Keratinocyte (primary cell): ENCODE measurements at regions of chr1 and their contacts with region 1.

Region 1: GRCh38 chr1:100459358-100460114 is 78.4 kb upstream of the GPR88 start:
- DNase-seq: no peak
- H3K4me3 ChIP-seq: no peak overlapping the region
- H3K27ac ChIP-seq: no peak overlapping the region
- H3K4me1 ChIP-seq: no peaks in the 10 kb centered on the region
- H3K27me3 ChIP-seq: no peaks in the 10 kb centered on the region
- CTCF ChIP-seq: peak; percentile 82 to 92 (median 87)

Region 2: DNA sequence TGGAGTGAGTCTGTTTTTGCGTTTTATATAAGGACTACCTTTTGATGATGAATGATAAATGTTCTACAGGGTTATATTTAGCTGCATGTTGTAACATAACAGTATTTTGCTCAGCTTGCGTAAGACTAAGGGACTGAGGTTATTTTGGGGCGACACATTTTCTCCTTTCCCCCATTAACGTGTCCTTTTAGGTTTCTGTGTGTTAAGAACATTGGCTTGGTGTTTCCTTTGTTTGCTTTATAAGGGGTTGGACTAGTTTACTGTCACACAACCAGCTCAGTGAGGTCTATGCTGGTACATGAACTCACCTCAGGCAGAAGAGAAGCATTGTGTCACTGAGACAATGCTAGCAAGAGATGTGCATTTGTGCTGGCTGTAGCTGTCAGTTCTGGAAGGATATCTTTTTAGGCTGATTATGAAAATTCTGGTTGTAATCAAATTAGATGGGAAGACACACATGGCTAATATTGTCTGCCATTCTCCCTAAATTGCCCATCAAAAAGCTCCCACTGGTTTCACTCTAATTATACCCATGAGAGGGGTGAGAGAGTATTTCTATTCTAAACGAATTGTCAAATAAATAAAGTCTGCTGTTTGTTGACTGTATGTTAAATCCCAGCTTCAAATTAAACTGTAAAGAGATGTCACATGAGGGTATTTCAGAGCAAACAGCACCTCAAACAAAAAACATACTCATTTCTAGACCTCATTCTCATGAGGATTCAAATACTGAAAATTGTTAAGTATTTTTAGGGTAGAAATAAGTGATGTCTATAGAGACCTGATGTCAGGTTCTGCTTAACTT is 44.6 kb before region 1 on chr1:
- dilution Hi-C with region 1: no loop called
- DNase-seq: no peak
- H3K4me3 ChIP-seq: no peak overlapping the region
- H3K27ac ChIP-seq: no peak overlapping the region
- H3K4me1 ChIP-seq: no peaks in the 10 kb centered on the region
- H3K27me3 ChIP-seq: no peaks in the 10 kb centered on the region
- CTCF ChIP-seq: no peak

Region 3: GRCh38 chr1:100866041-100866900 is 406.7 kb after region 1 on chr1:
- dilution Hi-C with region 1: loop called (anchors 25 kb)
- DNase-seq: no peak
- H3K4me3 ChIP-seq: no peak overlapping the region
- H3K27ac ChIP-seq: no peak overlapping the region
- H3K4me1 ChIP-seq: no peaks in the 10 kb centered on the region
- H3K27me3 ChIP-seq: no peaks in the 10 kb centered on the region
- CTCF ChIP-seq: peak in 2 of 3 experiments; percentile 27 to 37

Region 4: GRCh38 chr1:100912019-100912418 is 452.5 kb after region 1 on chr1:
- dilution Hi-C with region 1: no loop called
- DNase-seq: no peak
- H3K4me3 ChIP-seq: no peak overlapping the region
- H3K27ac ChIP-seq: no peak overlapping the region
- H3K4me1 ChIP-seq: no peaks in the 10 kb centered on the region
- H3K27me3 ChIP-seq: no peaks in the 10 kb centered on the region
- CTCF ChIP-seq: no peak